Dendritic cell treated with granulocyte-macrophage colony-stimulating factor and Interleukin-4, amounts not matched to agents 40 ng/mL and 50 ng/mL, for 4 days (primary cell): ENCODE measurements at regions of chr1 and their contacts with region 1.

Region 1: GRCh38 chr1:212699104-212699624 is 476 bp downstream of the BATF3 start:
- H3K4me3 Mint-ChIP-seq: peak overlapping the region; percentile 92
- H3K27ac Mint-ChIP-seq: peak overlapping the region; percentile 90
- H3K4me1 Mint-ChIP-seq: peaks cover 54% of the 10 kb centered on the region
- H3K27me3 Mint-ChIP-seq: peaks cover 16% of the 10 kb centered on the region

Region 2: DNA sequence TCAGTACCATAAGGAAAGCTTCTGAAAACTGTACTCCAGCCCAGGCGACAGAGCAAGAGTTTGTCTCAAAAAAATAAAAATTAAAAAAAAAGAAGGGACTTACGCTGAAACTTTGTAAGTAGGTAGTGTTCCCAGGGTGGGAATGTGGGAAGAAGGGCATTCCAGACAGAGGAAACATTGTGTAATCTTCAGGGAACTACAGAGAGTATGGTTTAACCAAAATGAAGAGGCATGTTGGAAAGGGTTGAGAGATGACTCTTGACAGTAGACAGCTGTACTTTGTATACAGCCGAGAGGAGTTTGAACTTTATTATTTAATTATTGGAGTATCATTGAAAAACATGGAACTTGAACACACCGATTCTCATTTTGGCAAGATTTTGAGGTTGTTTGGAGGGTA is 370.9 kb before region 1 on chr1:
- intact Hi-C with region 1: no loop called
- H3K4me3 Mint-ChIP-seq: no peak overlapping the region
- H3K27ac Mint-ChIP-seq: no peak overlapping the region
- H3K4me1 Mint-ChIP-seq: no peaks in the 10 kb centered on the region
- H3K27me3 Mint-ChIP-seq: no peaks in the 10 kb centered on the region

Region 3: DNA sequence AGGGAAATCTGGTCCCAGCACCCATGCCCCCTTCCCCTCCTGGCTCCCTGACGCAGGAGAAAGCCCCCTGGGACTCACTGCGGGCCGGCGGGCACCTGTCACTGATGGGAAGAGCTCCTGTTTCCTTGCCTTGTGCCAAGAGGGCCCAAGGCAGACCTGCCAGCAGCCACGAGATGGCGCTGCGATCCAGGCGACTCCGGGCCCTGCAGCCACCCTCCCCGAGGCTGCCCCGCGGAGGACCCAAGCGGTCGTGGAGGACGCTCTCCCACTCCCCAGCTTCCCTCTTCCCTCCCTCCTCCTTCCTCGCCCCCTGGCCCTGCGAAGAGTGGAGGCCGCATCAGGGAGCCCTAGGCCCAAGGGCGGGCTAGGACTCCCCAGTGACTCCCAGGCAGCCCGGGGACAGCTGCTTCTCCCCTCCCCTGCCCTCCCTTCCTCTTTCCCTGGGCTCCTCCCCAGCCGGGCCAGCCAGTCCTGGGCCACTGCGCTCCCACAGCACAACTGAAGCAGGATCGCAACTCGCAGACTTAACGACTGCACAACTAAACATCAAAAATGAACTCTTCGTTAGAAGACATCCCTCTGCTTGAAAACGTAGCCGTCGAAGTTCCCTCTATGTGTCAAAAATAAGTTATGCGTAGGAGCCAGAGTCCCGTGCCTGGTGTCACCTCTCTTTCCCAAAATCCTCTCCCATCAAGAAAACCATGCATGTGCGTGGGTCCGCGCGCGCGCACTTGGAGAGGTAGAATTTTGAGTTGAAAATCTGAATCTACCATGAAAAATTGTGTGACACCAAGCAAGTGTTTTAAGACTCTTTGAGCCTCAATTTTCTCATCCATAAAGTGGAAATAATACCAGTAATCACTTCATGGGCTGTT is 33.7 kb before region 1 on chr1:
- intact Hi-C with region 1: loop called (anchors 1 kb)
- H3K4me3 Mint-ChIP-seq: peak overlapping the region; percentile 87
- H3K27ac Mint-ChIP-seq: peak overlapping the region; percentile 99
- H3K4me1 Mint-ChIP-seq: peaks cover 75% of the 10 kb centered on the region
- H3K27me3 Mint-ChIP-seq: peaks cover 5% of the 10 kb centered on the region

Region 4: GRCh38 chr1:212685429-212685828 is 13.7 kb before region 1 on chr1:
- intact Hi-C with region 1: loop called (anchors 2 kb)
- H3K4me3 Mint-ChIP-seq: peak overlapping the region; percentile 24
- H3K27ac Mint-ChIP-seq: no peak overlapping the region
- H3K4me1 Mint-ChIP-seq: peaks cover 10% of the 10 kb centered on the region
- H3K27me3 Mint-ChIP-seq: no peaks in the 10 kb centered on the region

Region 5: GRCh38 chr1:212749821-212750535 is 50.8 kb after region 1 on chr1:
- intact Hi-C with region 1: loop called (anchors 5 kb)
- H3K4me3 Mint-ChIP-seq: peak overlapping the region; percentile 48
- H3K27ac Mint-ChIP-seq: peak overlapping the region; percentile 68
- H3K4me1 Mint-ChIP-seq: peaks cover 36% of the 10 kb centered on the region
- H3K27me3 Mint-ChIP-seq: no peaks in the 10 kb centered on the region